ENCODE measurements at regions of chr22 and their contacts with region 1.

Region 1: GRCh38 chr22:23938328-23939016 is 22.5 kb downstream of the GSTT2B start:
- DNase-seq: no peak
- ATAC-seq: peak in 3 of 8 donors; percentile 24 to 93 (median 61)
- H3K4me3 ChIP-seq: no peak overlapping the region
- H3K27ac ChIP-seq: peak overlapping the region in 3 of 10 donors; percentile 15 to 58 (median 23)
- H3K4me1 ChIP-seq: peaks cover 0 to 4% (median 0%) of the 10 kb centered on the region in 9 donors
- H3K27me3 ChIP-seq: no peaks in the 10 kb centered on the region
- CTCF ChIP-seq: no peak

Region 2: DNA sequence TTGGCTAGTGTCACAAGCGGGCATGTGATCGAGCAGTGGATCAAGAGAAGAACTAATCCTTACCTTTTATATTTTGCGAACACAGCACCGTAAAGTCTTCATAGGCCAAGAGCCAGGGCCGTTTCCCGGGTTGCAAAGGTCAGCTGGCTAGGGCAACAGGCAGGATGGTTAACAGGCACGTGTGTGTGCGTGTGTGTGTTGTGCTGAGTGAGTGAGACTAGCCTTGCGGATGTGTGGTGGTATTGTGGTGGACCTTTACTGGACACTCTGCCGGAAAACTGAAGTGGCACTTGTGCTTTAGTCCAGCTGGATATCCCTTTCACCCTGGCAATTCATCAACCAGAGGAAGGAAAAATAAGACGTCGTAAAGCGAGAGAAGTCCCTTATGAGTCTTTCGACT is 581.4 kb before region 1 on chr22:
- intact Hi-C with region 1: no loop called
- DNase-seq: no peak
- ATAC-seq: no peak
- H3K4me3 ChIP-seq: no peak overlapping the region
- H3K27ac ChIP-seq: no peak overlapping the region
- H3K4me1 ChIP-seq: no peaks in the 10 kb centered on the region
- H3K27me3 ChIP-seq: peaks cover 0 to 16% (median 11%) of the 10 kb centered on the region in 7 donors
- CTCF ChIP-seq: no peak

Region 3: DNA sequence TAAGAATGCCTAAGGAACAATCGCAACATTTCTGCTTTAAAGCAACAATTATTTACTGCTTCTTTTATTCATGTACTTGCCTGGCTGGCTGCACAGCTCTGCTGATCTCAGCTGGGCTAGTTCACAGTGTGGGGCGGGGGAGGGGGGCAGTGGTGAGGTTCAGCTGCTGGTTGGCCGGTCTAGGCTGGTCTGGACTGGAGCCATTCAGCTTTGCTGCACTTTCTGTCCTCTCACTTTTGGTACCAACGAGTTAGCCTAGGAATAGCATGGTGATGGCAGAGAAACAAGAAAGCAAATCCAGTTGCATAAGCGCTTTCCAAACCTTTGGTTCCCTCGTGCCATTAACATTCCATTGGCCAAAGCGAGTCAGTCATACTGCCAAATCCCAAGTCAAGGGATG is 60.3 kb before region 1 on chr22:
- intact Hi-C with region 1: loop called in 2 of 10 experiments (anchors 10 kb)
- DNase-seq: peak in 1 of 2 donors; percentile 32
- ATAC-seq: peak; percentile 38 to 91 (median 78)
- H3K4me3 ChIP-seq: no peak overlapping the region
- H3K27ac ChIP-seq: peak overlapping the region in 2 of 10 donors; percentile 36 to 49
- H3K4me1 ChIP-seq: peaks cover 0 to 12% (median 0%) of the 10 kb centered on the region in 9 donors
- H3K27me3 ChIP-seq: no peaks in the 10 kb centered on the region
- CTCF ChIP-seq: no peak

Region 4: GRCh38 chr22:23970816-23971486 is 32.5 kb after region 1 on chr22:
- intact Hi-C with region 1: loop called in 1 of 10 experiments (anchors 5 kb)
- DNase-seq: no peak
- ATAC-seq: no peak
- H3K4me3 ChIP-seq: no peak overlapping the region
- H3K27ac ChIP-seq: no peak overlapping the region
- H3K4me1 ChIP-seq: peaks cover 0 to 23% (median 0%) of the 10 kb centered on the region in 9 donors
- H3K27me3 ChIP-seq: no peaks in the 10 kb centered on the region
- CTCF ChIP-seq: no peak

Region 5: GRCh38 chr22:23997092-23997491 is 58.6 kb after region 1 on chr22:
- intact Hi-C with region 1: loop called in 2 of 10 experiments (anchors 5 to 10 kb)
- DNase-seq: no peak
- ATAC-seq: no peak
- H3K4me3 ChIP-seq: no peak overlapping the region
- H3K27ac ChIP-seq: no peak overlapping the region
- H3K4me1 ChIP-seq: no peaks in the 10 kb centered on the region
- H3K27me3 ChIP-seq: no peaks in the 10 kb centered on the region
- CTCF ChIP-seq: no peak

Region 6: GRCh38 chr22:24005201-24005600 is 66.7 kb after region 1 on chr22 and contains the start of gene GSTT4:
- intact Hi-C with region 1: loop called in 4 of 10 experiments (anchors 5 kb)
- DNase-seq: peak; percentile 80 to 86
- ATAC-seq: peak; percentile 88 to 98 (median 94)
- H3K4me3 ChIP-seq: peak within 1 kb of the TSS in 1 of 10 donors; percentile 5
- H3K27ac ChIP-seq: peak within 1 kb of the TSS in 8 of 10 donors; percentile 39 to 74 (median 61)
- H3K4me1 ChIP-seq: peaks cover 0 to 18% (median 11%) of the 10 kb centered on the region in 9 donors
- H3K27me3 ChIP-seq: no peaks in the 10 kb centered on the region
- CTCF ChIP-seq: no peak
- total RNA-seq, gene GSTT4: not detected

Region 7: GRCh38 chr22:24067587-24068376 is 129.3 kb after region 1 on chr22:
- intact Hi-C with region 1: no loop called
- DNase-seq: no peak
- ATAC-seq: no peak
- H3K4me3 ChIP-seq: no peak overlapping the region
- H3K27ac ChIP-seq: no peak overlapping the region
- H3K4me1 ChIP-seq: peaks cover 0 to 37% (median 12%) of the 10 kb centered on the region in 9 donors
- H3K27me3 ChIP-seq: no peaks in the 10 kb centered on the region
- CTCF ChIP-seq: no peak

Region 8: DNA sequence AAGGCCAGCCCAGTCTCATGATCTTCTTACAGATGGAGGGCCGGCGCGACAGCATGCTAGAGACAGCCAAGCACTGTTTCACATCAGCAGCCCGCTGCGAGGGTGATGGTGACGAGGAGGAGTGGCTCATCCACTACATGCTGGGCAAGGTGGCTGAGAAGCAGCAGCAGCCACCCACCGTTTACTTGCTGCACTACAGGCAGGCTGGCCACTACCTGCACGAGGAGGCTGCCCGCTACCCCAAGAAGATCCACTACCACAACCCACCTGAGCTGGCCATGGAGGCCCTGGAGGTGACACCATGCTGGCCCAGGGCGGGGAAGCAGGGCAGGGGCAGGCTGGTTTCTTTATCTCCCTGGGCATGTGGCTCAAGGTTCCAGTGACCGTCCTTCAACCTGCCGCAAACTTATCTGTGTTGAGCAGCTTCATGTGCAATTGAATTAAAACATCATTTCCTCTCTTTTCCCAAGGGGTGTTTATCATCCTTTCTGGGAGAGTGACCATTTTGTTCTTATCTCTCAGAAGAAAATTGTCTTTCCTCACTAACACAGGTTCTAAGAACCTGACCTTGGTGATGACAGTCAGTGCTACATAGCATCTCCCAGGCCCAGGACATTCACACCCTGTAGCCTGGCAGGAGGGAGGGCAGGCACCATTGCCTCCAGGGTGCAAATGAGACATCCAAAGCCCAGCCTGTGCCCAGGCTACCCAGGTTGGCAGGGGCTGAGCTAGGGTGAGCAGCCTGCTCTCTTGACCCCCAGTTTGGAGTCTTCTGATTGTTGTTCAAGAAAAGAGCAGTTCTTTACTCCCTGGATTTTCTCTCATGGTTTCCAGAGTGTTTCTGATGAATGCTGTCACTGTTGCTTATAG is 153.3 kb after region 1 on chr22:
- intact Hi-C with region 1: no loop called
- DNase-seq: peak; percentile 71 to 73
- ATAC-seq: peak; percentile 70 to 96 (median 88)
- H3K4me3 ChIP-seq: no peak overlapping the region
- H3K27ac ChIP-seq: peak overlapping the region in 8 of 10 donors; percentile 26 to 77 (median 62)
- H3K4me1 ChIP-seq: peaks cover 0 to 39% (median 16%) of the 10 kb centered on the region in 9 donors
- H3K27me3 ChIP-seq: no peaks in the 10 kb centered on the region
- CTCF ChIP-seq: peak in 4 of 9 donors; percentile 20 to 43 (median 30)